Naive thymus-derived CD4-positive, alpha-beta T cell (primary cell): ENCODE measurements at regions of chr22 and their contacts with region 1.

Region 1: GRCh38 chr22:38872172-38872830 is at the start of gene CBX6:
- DNase-seq: peak; percentile 90 to 98 (median 95)
- ATAC-seq: peak; percentile 89
- H3K4me3 ChIP-seq: peak within 1 kb of the TSS; percentile 98
- H3K4me3 Mint-ChIP-seq: peak within 1 kb of the TSS; percentile 88 to 97 (median 93)
- H3K27ac ChIP-seq: peak within 1 kb of the TSS; percentile 73
- H3K27ac Mint-ChIP-seq: peak within 1 kb of the TSS; percentile 81 to 93 (median 89)
- H3K4me1 ChIP-seq: peaks cover 28 to 34% of the 10 kb centered on the region in 2 donors
- H3K4me1 Mint-ChIP-seq: peaks cover 35 to 55% (median 49%) of the 10 kb centered on the region in 7 donors
- H3K27me3 ChIP-seq: no peaks in the 10 kb centered on the region
- H3K27me3 Mint-ChIP-seq: peaks cover 0 to 18% (median 0%) of the 10 kb centered on the region in 5 donors
- total RNA-seq, gene CBX6: 41.7 to 77.0 (median 73.4) TPM

Region 2: GRCh38 chr22:38733329-38733723 is 139.0 kb before region 1 on chr22:
- CTCF ChIA-PET with region 1: interaction called, 5 read pairs
- POLR2A ChIA-PET with region 1: interaction called, 3 read pairs
- intact Hi-C with region 1: loop called in 1 of 2 experiments (anchors 1 kb)
- DNase-seq: peak in 5 of 9 donors; percentile 37 to 55 (median 49)
- ATAC-seq: peak; percentile 67
- H3K4me3 ChIP-seq: no peak overlapping the region
- H3K4me3 Mint-ChIP-seq: peak overlapping the region in 4 of 10 donors; percentile 11 to 51 (median 40)
- H3K27ac ChIP-seq: peak overlapping the region; percentile 54
- H3K27ac Mint-ChIP-seq: peak overlapping the region; percentile 76 to 91 (median 87)
- H3K4me1 ChIP-seq: peaks cover 15 to 18% of the 10 kb centered on the region in 2 donors
- H3K4me1 Mint-ChIP-seq: peaks cover 25 to 63% (median 53%) of the 10 kb centered on the region in 7 donors
- H3K27me3 ChIP-seq: no peaks in the 10 kb centered on the region
- H3K27me3 Mint-ChIP-seq: no peaks in the 10 kb centered on the region

Region 3: DNA sequence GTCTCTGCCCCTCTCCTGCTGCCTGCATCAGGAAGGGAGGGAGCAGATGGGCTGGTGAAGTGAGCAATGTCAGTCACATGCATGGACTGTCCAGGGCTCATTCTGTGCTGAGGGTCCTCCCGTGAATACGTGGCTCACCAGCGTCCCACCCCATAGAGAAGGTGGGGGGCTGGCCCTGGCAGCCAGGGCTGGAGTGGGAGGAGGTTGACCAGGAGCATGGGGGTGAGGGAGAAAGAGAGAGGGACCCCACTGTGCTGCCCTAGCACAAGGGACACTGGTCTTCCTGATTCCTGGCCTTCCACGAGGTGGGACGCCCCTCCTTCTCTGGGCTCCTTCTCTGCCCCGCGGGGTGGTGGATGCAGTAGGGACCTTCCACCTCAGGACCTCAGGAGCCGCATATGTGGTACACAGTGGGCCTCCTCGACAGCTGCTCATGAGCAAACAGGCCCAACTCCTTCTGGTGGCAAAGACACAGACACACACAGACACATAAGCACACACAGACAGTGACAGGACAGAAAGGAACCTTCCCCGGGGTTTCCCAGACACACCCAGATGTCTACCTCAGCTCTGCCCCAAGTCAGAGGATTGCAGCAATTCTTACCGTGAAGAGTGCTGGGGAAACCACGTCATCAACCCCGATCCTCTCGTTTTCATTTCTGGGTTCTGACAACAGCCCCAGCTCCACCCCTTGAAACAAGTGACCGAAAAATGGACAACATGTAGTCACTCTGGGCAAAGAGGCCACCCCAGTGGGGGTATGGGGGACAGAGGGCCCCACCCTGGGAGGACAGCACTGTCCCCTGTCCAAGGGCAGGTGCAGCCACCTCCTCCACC is 81.5 kb after region 1 on chr22:
- CTCF ChIA-PET with region 1: no interaction called
- POLR2A ChIA-PET with region 1: no interaction called
- intact Hi-C with region 1: loop called in 1 of 2 experiments (anchors 2 kb)
- DNase-seq: peak in 1 of 9 donors; percentile 74
- ATAC-seq: peak; percentile 89
- H3K4me3 ChIP-seq: no peak overlapping the region
- H3K4me3 Mint-ChIP-seq: peak overlapping the region in 1 of 10 donors; percentile 66
- H3K27ac ChIP-seq: no peak overlapping the region
- H3K27ac Mint-ChIP-seq: peak overlapping the region in 1 of 9 donors; percentile 96
- H3K4me1 ChIP-seq: no peaks in the 10 kb centered on the region
- H3K4me1 Mint-ChIP-seq: peaks cover 0 to 48% (median 0%) of the 10 kb centered on the region in 7 donors
- H3K27me3 ChIP-seq: no peaks in the 10 kb centered on the region
- H3K27me3 Mint-ChIP-seq: peaks cover 0 to 9% (median 0%) of the 10 kb centered on the region in 5 donors

Region 4: GRCh38 chr22:39003165-39003638 is 130.9 kb after region 1 on chr22:
- CTCF ChIA-PET with region 1: interaction called, 94 read pairs
- POLR2A ChIA-PET with region 1: interaction called, 14 read pairs
- intact Hi-C with region 1: loop called in 1 of 2 experiments (anchors 1 kb)
- DNase-seq: peak; percentile 40 to 69 (median 62)
- ATAC-seq: peak; percentile 95
- H3K4me3 ChIP-seq: no peak overlapping the region
- H3K4me3 Mint-ChIP-seq: no peak overlapping the region
- H3K27ac ChIP-seq: no peak overlapping the region
- H3K27ac Mint-ChIP-seq: peak overlapping the region in 4 of 9 donors; percentile 7 to 41 (median 24)
- H3K4me1 ChIP-seq: peaks cover 9 to 11% of the 10 kb centered on the region in 2 donors
- H3K4me1 Mint-ChIP-seq: peaks cover 0 to 17% (median 9%) of the 10 kb centered on the region in 7 donors
- H3K27me3 ChIP-seq: no peaks in the 10 kb centered on the region
- H3K27me3 Mint-ChIP-seq: peaks cover 0 to 15% (median 0%) of the 10 kb centered on the region in 5 donors

Region 5: GRCh38 chr22:39152511-39153219 is 280.4 kb after region 1 on chr22 and contains the start of gene CBX7:
- CTCF ChIA-PET with region 1: interaction called, 7 read pairs
- POLR2A ChIA-PET with region 1: interaction called, 5 read pairs
- intact Hi-C with region 1: loop called (anchors 1 kb)
- DNase-seq: peak; percentile 91 to 98 (median 94)
- ATAC-seq: peak; percentile 93
- H3K4me3 ChIP-seq: peak within 1 kb of the TSS; percentile 95
- H3K4me3 Mint-ChIP-seq: peak within 1 kb of the TSS; percentile 83 to 99 (median 92)
- H3K27ac ChIP-seq: peak within 1 kb of the TSS; percentile 89
- H3K27ac Mint-ChIP-seq: peak within 1 kb of the TSS; percentile 87 to 96 (median 91)
- H3K4me1 ChIP-seq: peaks cover 31 to 46% of the 10 kb centered on the region in 2 donors
- H3K4me1 Mint-ChIP-seq: peaks cover 7 to 41% (median 35%) of the 10 kb centered on the region in 7 donors
- H3K27me3 ChIP-seq: no peaks in the 10 kb centered on the region
- H3K27me3 Mint-ChIP-seq: peaks cover 0 to 41% (median 0%) of the 10 kb centered on the region in 5 donors
- total RNA-seq, gene CBX7: 14.2 to 164 (median 76.9) TPM

Region 6: DNA sequence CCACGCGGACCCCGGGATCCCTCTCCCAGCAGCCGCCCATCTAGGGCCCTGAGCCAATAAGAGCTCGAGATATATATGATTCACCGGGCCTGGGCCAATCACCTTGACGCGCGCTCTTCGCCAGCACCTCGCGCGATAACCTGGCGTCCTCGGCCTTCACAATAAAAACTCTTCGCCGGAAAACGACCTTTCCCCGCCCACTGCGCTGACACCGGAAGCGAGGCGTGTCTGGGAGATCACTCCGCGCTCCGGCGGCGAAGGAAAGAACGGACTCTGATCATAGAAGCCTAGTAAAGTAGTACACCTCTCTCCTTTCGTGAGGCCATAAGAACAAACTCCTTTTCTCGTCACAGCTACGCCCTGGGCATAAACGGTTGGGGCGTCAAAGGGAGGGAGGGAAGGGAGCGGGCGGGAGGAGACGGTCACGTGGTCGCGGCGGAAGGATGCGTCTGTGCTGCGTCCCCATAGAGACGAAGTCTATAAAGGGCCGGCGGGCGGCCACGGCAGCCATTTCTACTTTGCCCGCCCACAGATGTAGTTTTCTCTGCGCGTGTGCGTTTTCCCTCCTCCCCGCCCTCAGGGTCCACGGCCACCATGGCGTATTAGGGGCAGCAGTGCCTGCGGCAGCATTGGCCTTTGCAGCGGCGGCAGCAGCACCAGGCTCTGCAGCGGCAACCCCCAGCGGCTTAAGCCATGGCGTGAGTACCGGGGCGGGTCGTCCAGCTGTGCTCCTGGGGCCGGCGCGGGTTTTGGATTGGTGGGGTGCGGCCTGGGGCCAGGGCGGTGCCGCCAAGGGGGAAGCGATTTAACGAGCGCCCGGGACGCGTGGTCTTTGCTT is 648.0 kb after region 1 on chr22 and contains the start of gene ATF4:
- CTCF ChIA-PET with region 1: no interaction called
- POLR2A ChIA-PET with region 1: no interaction called
- intact Hi-C with region 1: loop called in 1 of 2 experiments (anchors 10 kb)
- DNase-seq: peak; percentile 88 to 98 (median 96)
- ATAC-seq: peak; percentile 92
- H3K4me3 ChIP-seq: peak within 1 kb of the TSS; percentile 96
- H3K4me3 Mint-ChIP-seq: peak within 1 kb of the TSS; percentile 83 to 99 (median 96)
- H3K27ac ChIP-seq: peak within 1 kb of the TSS; percentile 84
- H3K27ac Mint-ChIP-seq: peak within 1 kb of the TSS; percentile 94 to 100 (median 97)
- H3K4me1 ChIP-seq: peaks cover 27 to 39% of the 10 kb centered on the region in 2 donors
- H3K4me1 Mint-ChIP-seq: peaks cover 29 to 61% (median 48%) of the 10 kb centered on the region in 7 donors
- H3K27me3 ChIP-seq: no peaks in the 10 kb centered on the region
- H3K27me3 Mint-ChIP-seq: peaks cover 0 to 4% (median 0%) of the 10 kb centered on the region in 5 donors
- total RNA-seq, gene ATF4: 235 to 293 (median 244) TPM